PC-9 (cell line): ENCODE measurements at regions of chr17 and their contacts with region 1.

Region 1: GRCh38 chr17:62800279-62801042 is 7.7 kb downstream of the MARCHF10 start:
- DNase-seq: peak; percentile 88 to 98
- H3K4me3 ChIP-seq: peak overlapping the region; percentile 43; the same call in 1 of the 2 replicates
- H3K27ac ChIP-seq: peak overlapping the region; percentile 84
- H3K4me1 ChIP-seq: peaks cover 59% of the 10 kb centered on the region
- H3K27me3 ChIP-seq: no peaks in the 10 kb centered on the region
- CTCF ChIP-seq: no peak

Region 2: GRCh38 chr17:62860907-62861848 is 60.7 kb after region 1 on chr17:
- CTCF ChIA-PET with region 1: no interaction called
- POLR2A ChIA-PET with region 1: no interaction called
- intact Hi-C with region 1: loop called (anchors 2 kb)
- DNase-seq: peak; percentile 79 to 94
- H3K4me3 ChIP-seq: peak overlapping the region; percentile 32; the same call in 1 of the 2 replicates
- H3K27ac ChIP-seq: peak overlapping the region; percentile 80
- H3K4me1 ChIP-seq: peaks cover 54% of the 10 kb centered on the region
- H3K27me3 ChIP-seq: no peaks in the 10 kb centered on the region
- CTCF ChIP-seq: no peak

Region 3: GRCh38 chr17:64164596-64165285 is 1364.3 kb after region 1 on chr17:
- CTCF ChIA-PET with region 1: no interaction called
- POLR2A ChIA-PET with region 1: interaction called, 13 read pairs
- intact Hi-C with region 1: no loop called
- DNase-seq: no peak
- H3K4me3 ChIP-seq: no peak overlapping the region
- H3K27ac ChIP-seq: no peak overlapping the region
- H3K4me1 ChIP-seq: no peaks in the 10 kb centered on the region
- H3K27me3 ChIP-seq: no peaks in the 10 kb centered on the region
- CTCF ChIP-seq: no peak